Activated T-helper 1 cell treated with anti-CD3 and anti-CD28 coated beads, Interleukin-12 subunit alpha, Interleukin-12 subunit beta, Interleukin-2, Interleukin-4 antibody, amounts not matched to agents 30 ng/mL and 10 ng/mL and 1 ng/mL, durations not matched to agents 14 hours and 24 hours and 36 hours (primary cell): ENCODE measurements at regions of chr4 and their contacts with region 1.

Region 1: DNA sequence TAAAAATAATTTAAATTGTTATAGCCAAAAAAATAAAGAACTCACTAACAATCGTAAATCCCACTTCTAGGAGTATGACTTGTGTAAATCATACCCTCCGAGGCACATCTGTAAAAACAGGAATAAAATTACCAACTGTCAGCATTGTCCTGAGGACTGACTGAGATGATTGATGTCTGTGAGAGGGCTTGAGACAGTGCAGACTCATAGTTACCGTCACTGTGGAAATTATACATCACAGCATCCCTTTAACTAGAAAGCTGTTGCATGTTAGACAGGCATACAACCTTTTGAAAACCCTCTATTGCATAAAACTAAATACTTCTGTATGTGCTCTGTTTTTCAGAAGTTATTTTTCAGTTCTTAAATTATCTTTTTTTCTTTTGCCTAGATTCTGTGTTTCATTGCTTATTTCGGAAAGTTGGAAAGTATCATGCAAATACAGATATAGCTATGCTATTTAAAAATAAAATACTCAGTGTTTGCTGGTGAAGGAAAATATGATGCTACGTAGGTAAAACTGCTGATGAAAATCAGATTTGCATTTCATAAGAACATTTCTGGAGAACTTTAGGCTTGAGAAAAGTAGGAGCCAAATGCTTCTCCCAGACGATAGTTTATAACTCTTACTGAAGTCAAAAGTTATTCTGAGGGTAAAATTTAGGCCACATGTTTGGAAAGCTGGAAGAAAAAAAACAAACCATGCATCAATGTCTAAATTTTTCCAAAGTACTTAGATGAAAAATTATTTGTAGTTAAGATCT is 13.6 kb upstream of the RBPJ start:
- DNase-seq: no peak
- H3K4me3 Mint-ChIP-seq: peak overlapping the region; percentile 23
- H3K27ac Mint-ChIP-seq: peak overlapping the region; percentile 88
- H3K4me1 Mint-ChIP-seq: peaks cover 36% of the 10 kb centered on the region
- H3K27me3 Mint-ChIP-seq: no peaks in the 10 kb centered on the region

Region 2: GRCh38 chr4:26020083-26020668 is 287.0 kb before region 1 on chr4:
- intact Hi-C with region 1: loop called (anchors 1 kb)
- DNase-seq: no peak
- H3K4me3 Mint-ChIP-seq: no peak overlapping the region
- H3K27ac Mint-ChIP-seq: peak overlapping the region; percentile 18
- H3K4me1 Mint-ChIP-seq: peaks cover 21% of the 10 kb centered on the region
- H3K27me3 Mint-ChIP-seq: peaks cover 9% of the 10 kb centered on the region

Region 3: GRCh38 chr4:26257850-26258249 is 49.4 kb before region 1 on chr4:
- intact Hi-C with region 1: loop called (anchors 5 kb)
- DNase-seq: no peak
- H3K4me3 Mint-ChIP-seq: no peak overlapping the region
- H3K27ac Mint-ChIP-seq: no peak overlapping the region
- H3K4me1 Mint-ChIP-seq: peaks cover 8% of the 10 kb centered on the region
- H3K27me3 Mint-ChIP-seq: no peaks in the 10 kb centered on the region

Region 4: DNA sequence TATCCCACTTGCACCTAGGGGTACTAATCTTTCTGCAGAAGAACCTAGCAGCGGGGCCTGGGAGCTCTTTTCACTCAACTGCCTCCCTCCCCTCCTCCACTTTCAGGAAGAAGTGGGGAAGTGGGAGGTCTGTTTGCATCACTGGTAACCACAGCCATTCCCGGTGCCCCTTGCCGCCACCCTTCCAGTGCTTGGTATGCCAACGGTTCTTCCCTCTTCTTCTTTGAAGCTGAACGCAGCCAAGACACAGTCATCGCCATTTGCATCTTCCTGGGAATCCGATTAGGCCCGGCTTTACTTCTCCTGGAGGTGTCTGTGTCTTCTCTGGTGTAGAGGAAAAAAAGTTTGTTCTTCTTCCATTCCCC is 33.6 kb before region 1 on chr4:
- intact Hi-C with region 1: loop called (anchors 5 kb)
- DNase-seq: no peak
- H3K4me3 Mint-ChIP-seq: peak overlapping the region; percentile 12
- H3K27ac Mint-ChIP-seq: peak overlapping the region; percentile 36
- H3K4me1 Mint-ChIP-seq: peaks cover 36% of the 10 kb centered on the region
- H3K27me3 Mint-ChIP-seq: no peaks in the 10 kb centered on the region

Region 5: DNA sequence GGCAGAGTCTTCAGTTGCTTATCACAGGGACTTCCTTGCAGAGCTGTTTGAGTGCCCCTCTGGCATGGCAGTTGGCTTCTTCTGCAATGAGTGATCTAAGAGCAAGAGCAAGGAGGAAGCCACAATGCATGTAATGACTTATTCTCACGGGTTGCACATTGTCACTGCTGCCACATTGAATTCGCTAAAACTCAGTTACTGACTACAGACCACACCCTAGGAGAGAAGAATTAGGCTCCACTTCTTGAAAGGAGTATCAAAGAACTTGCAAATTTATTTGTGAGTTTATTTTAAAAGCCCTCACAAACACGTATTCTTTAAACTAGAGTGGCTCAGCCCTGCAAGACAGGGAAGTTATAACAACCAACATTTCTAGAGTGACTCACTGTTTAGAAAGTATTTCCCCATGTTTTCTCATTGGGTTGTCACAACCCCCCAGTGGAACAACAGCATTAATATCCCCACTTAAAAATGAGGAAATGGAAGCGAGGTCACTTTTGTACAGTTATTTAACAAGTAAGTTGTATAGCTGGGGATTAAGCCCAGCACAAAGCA is 18.8 kb before region 1 on chr4:
- intact Hi-C with region 1: loop called (anchors 1 kb)
- DNase-seq: peak; percentile 20
- H3K4me3 Mint-ChIP-seq: peak overlapping the region; percentile 25
- H3K27ac Mint-ChIP-seq: peak overlapping the region; percentile 61
- H3K4me1 Mint-ChIP-seq: peaks cover 32% of the 10 kb centered on the region
- H3K27me3 Mint-ChIP-seq: no peaks in the 10 kb centered on the region

Region 6: GRCh38 chr4:27206009-27206408 is 898.8 kb after region 1 on chr4:
- intact Hi-C with region 1: no loop called
- DNase-seq: no peak
- H3K4me3 Mint-ChIP-seq: no peak overlapping the region
- H3K27ac Mint-ChIP-seq: no peak overlapping the region
- H3K4me1 Mint-ChIP-seq: no peaks in the 10 kb centered on the region
- H3K27me3 Mint-ChIP-seq: no peaks in the 10 kb centered on the region